ENCODE measurements at regions of chr9 and their contacts with region 1.

Region 1: DNA sequence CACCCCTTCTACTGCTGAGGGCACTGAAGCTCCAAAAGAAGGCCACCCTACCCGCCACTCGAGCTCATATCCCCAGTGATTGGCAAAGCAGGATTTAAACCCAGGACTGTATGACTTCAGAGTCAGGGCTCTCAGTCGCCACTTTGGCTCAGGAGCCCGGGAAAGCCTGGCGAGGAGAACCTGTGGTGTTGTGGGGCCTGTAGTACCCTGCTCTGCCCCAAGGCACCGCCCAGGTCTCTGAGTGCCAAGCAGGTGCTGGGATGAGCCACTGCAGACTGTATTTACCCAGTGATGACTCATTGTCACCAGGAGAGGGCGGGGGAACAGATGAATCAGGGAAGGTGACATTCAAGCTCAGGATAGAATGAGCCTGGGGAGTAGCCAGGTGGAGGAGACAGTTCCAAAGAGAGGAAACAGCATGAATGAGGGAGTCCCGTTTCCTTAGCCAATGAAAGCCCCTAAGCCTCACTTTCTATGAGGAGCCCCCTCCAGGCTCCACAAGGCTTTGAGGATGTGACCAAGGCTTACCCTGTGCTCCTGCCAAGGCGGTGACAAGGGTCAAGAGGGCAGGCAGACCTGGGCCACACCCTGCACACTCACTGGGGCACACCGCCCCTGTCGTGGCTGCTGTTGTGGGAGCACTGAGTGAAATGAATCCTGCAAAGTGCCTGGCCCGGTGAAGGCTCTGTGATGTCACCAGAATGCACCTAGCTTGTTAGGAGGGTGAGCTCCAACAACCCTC is 17.8 kb upstream of the DPM2 start:
- DNase-seq: peak; percentile 95
- ATAC-seq: peak; percentile 91
- H3K4me3 Mint-ChIP-seq: peak overlapping the region; percentile 51
- H3K27ac Mint-ChIP-seq: peak overlapping the region; percentile 87
- H3K4me1 Mint-ChIP-seq: peaks cover 89% of the 10 kb centered on the region
- H3K27me3 Mint-ChIP-seq: no peaks in the 10 kb centered on the region

Region 2: DNA sequence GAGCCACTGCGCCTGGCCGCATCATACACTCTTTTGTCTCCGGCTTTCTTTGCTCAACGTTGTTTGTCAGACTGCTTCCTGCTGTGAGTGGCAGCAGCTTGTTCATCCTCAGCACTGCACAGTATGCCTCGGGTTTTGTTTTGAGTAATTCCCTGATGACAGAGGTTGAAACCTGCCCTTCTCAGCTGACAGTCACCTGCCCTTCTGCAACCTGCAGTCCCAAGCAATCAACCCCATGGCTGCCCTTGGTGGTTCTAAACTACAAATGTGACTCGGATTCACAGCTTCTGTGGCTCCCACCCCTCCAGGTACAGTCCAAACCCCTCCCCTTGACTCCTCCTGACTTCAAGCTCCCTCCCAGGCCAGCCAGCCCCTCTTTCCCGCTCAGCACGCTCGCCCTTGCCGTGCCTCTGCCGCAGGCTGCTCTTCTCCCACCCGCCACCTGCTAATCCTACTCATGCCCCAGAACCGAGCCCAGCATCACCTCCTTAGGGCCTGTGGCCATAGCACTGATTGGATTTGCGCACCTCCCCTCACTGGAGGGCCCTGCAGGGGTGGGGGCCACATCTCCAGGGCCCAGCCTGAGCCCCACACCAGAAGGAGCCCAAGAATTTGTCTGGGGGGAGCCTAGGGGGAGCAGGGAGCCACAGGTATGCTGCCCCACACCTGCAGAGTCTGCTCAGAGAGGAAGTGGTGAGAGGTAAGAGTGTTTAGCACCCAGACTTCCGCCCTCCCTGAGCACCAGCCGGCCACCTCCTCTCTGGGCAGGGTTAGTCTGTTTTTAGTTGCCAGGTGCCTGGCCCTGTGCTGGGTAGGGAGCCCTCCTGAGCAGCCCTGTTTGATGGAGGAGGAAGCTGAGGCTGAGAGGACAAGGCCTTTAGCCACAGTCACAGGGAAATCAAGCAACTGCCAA is 15.2 kb after region 1 on chr9:
- CTCF ChIA-PET with region 1: interaction called, 11 read pairs
- POLR2A ChIA-PET with region 1: interaction called, 9 read pairs
- intact Hi-C with region 1: loop called (anchors 1 kb)
- DNase-seq: peak; percentile 87
- ATAC-seq: peak; percentile 76
- H3K4me3 Mint-ChIP-seq: peak overlapping the region; percentile 69
- H3K27ac Mint-ChIP-seq: peak overlapping the region; percentile 92
- H3K4me1 Mint-ChIP-seq: peaks cover 97% of the 10 kb centered on the region
- H3K27me3 Mint-ChIP-seq: no peaks in the 10 kb centered on the region

Region 3: GRCh38 chr9:128007566-128008138 is 52.2 kb after region 1 on chr9:
- CTCF ChIA-PET with region 1: interaction called, 8 read pairs
- POLR2A ChIA-PET with region 1: no interaction called
- intact Hi-C with region 1: loop called in 1 of 2 experiments (anchors 2 kb)
- DNase-seq: peak; percentile 96
- ATAC-seq: peak; percentile 86
- H3K4me3 Mint-ChIP-seq: peak overlapping the region; percentile 81
- H3K27ac Mint-ChIP-seq: peak overlapping the region; percentile 93
- H3K4me1 Mint-ChIP-seq: peaks cover 49% of the 10 kb centered on the region
- H3K27me3 Mint-ChIP-seq: no peaks in the 10 kb centered on the region

Region 4: GRCh38 chr9:128026773-128027541 is 71.5 kb after region 1 on chr9:
- CTCF ChIA-PET with region 1: interaction called, 72 read pairs
- POLR2A ChIA-PET with region 1: interaction called, 3 read pairs
- intact Hi-C with region 1: loop called (anchors 1 kb)
- DNase-seq: peak; percentile 79
- ATAC-seq: peak; percentile 62
- H3K4me3 Mint-ChIP-seq: peak overlapping the region; percentile 65
- H3K27ac Mint-ChIP-seq: peak overlapping the region; percentile 94
- H3K4me1 Mint-ChIP-seq: peaks cover 91% of the 10 kb centered on the region
- H3K27me3 Mint-ChIP-seq: peaks cover 2% of the 10 kb centered on the region

Region 5: GRCh38 chr9:128094166-128094967 is 138.9 kb after region 1 on chr9:
- CTCF ChIA-PET with region 1: interaction called, 4 read pairs
- POLR2A ChIA-PET with region 1: no interaction called
- intact Hi-C with region 1: loop called in 1 of 2 experiments (anchors 5 kb)
- DNase-seq: peak; percentile 93
- ATAC-seq: peak; percentile 94
- H3K4me3 Mint-ChIP-seq: peak overlapping the region; percentile 61
- H3K27ac Mint-ChIP-seq: peak overlapping the region; percentile 97
- H3K4me1 Mint-ChIP-seq: peaks cover 84% of the 10 kb centered on the region
- H3K27me3 Mint-ChIP-seq: no peaks in the 10 kb centered on the region